ENCODE measurements at regions of chr3 and their contacts with region 1.

Region 1: GRCh38 chr3:150721285-150722130 is 17.8 kb upstream of the ERICH6 start:
- DNase-seq: peak; percentile 45
- ATAC-seq: peak; percentile 83
- H3K4me3 ChIP-seq: no peak overlapping the region
- H3K27ac ChIP-seq: no peak overlapping the region
- H3K4me1 ChIP-seq: peaks cover 0 to 11% of the 10 kb centered on the region in 2 experiments; a peak in 3 of 4 replicates
- H3K27me3 ChIP-seq: no peaks in the 10 kb centered on the region
- CTCF ChIP-seq: peak; percentile 69 to 91 (median 90)
- POLR2A ChIP-seq: no peak
- RAD21 ChIP-seq: peak; percentile 94

Region 2: DNA sequence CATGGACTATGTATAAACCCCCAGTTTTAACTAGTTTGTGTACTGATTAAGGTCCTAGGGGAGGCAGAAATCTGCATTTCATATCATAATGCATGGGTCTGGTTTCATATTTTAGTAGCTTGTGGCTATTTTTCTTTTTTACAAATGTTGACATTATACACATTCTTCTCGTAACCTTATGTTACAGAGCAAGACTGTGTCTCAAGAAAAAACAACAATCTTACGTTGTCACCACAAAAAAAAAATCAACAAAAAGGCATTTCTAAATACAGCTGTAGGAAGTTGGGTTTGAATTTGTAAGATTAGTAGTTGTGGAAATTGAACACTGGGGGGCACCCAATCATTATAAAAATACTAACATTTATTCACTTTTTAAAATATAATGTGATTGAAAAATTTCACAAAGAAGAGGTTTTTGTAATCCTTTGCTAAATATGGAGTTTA is 193.1 kb before region 1 on chr3:
- CTCF ChIA-PET with region 1: no interaction called
- POLR2A ChIA-PET with region 1: no interaction called
- RAD21 ChIA-PET with region 1: no interaction called
- intact Hi-C with region 1: loop called (anchors 5 kb)
- DNase-seq: no peak
- ATAC-seq: no peak; the same call in 1 of the 2 replicates
- H3K4me3 ChIP-seq: no peak overlapping the region
- H3K27ac ChIP-seq: no peak overlapping the region
- H3K4me1 ChIP-seq: no peaks in the 10 kb centered on the region
- H3K27me3 ChIP-seq: no peaks in the 10 kb centered on the region
- CTCF ChIP-seq: peak; percentile 18 to 44 (median 35); a peak in 2 of 6 replicates
- POLR2A ChIP-seq: no peak
- RAD21 ChIP-seq: peak; percentile 65

Region 3: DNA sequence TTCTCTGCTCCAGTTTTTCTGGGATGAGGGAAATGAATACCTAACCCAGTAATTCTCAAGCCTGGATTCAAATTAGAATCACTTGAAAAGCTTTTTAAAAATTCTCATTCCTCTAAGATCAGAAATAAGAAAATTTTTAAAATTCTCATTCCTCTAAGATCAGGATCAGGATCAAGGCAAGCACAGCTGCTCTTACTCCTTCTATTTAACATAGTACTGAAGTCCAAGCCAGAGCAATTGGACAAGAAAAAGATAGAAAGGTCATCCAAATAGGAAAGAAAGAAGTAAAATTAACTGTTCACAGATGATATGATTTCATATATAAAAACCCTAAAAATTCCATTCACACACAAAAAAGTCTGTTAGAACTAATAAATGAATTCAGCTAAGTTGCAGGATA is 275.2 kb after region 1 on chr3:
- CTCF ChIA-PET with region 1: no interaction called
- POLR2A ChIA-PET with region 1: no interaction called
- RAD21 ChIA-PET with region 1: no interaction called
- intact Hi-C with region 1: no loop called
- DNase-seq: no peak
- ATAC-seq: no peak
- H3K4me3 ChIP-seq: no peak overlapping the region
- H3K27ac ChIP-seq: no peak overlapping the region
- H3K4me1 ChIP-seq: no peaks in the 10 kb centered on the region
- H3K27me3 ChIP-seq: no peaks in the 10 kb centered on the region
- CTCF ChIP-seq: no peak
- POLR2A ChIP-seq: no peak
- RAD21 ChIP-seq: no peak